ENCODE measurements at regions of chr20 and their contacts with region 1.

Region 1: GRCh38 chr20:35284267-35284991 is at the start of gene EIF6:
- DNase-seq: peak; percentile 23 to 78 (median 53)
- ATAC-seq: peak; percentile 80
- H3K4me3 ChIP-seq: peak within 1 kb of the TSS; percentile 56
- H3K4me3 Mint-ChIP-seq: peak within 1 kb of the TSS; percentile 71 to 96 (median 91)
- H3K27ac ChIP-seq: peak within 1 kb of the TSS; percentile 89
- H3K27ac Mint-ChIP-seq: peak within 1 kb of the TSS; percentile 79 to 94 (median 87)
- H3K4me1 ChIP-seq: peaks cover 7 to 8% of the 10 kb centered on the region in 2 donors
- H3K4me1 Mint-ChIP-seq: peaks cover 18 to 43% (median 30%) of the 10 kb centered on the region in 7 donors
- H3K27me3 ChIP-seq: no peaks in the 10 kb centered on the region
- H3K27me3 Mint-ChIP-seq: no peaks in the 10 kb centered on the region
- total RNA-seq, gene EIF6: 35.4 to 117 (median 39.9) TPM

Region 2: DNA sequence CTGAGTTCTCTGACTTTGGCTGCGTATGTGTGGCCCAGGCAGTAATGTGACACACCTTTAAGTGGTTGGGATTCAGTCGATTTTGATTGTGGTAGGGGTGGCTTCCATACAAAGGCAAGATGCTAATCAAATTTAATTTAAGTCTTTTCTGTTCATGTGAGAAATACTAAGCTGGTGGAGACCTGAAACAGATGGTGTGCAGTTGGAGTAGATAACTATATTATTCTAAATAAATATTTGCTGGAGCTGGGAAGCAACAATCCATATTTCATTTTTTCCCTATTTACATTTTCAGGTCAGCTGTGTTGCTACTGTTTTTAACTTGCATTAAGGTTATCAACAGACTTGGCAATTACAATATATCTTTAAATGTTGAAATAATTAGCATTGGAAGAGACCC is 1689.7 kb before region 1 on chr20:
- CTCF ChIA-PET with region 1: no interaction called
- POLR2A ChIA-PET with region 1: no interaction called
- intact Hi-C with region 1: no loop called
- DNase-seq: no peak
- ATAC-seq: no peak
- H3K4me3 ChIP-seq: no peak overlapping the region
- H3K4me3 Mint-ChIP-seq: no peak overlapping the region
- H3K27ac ChIP-seq: no peak overlapping the region
- H3K27ac Mint-ChIP-seq: no peak overlapping the region
- H3K4me1 ChIP-seq: no peaks in the 10 kb centered on the region
- H3K4me1 Mint-ChIP-seq: peaks cover 0 to 9% (median 4%) of the 10 kb centered on the region in 7 donors
- H3K27me3 ChIP-seq: no peaks in the 10 kb centered on the region
- H3K27me3 Mint-ChIP-seq: no peaks in the 10 kb centered on the region

Region 3: DNA sequence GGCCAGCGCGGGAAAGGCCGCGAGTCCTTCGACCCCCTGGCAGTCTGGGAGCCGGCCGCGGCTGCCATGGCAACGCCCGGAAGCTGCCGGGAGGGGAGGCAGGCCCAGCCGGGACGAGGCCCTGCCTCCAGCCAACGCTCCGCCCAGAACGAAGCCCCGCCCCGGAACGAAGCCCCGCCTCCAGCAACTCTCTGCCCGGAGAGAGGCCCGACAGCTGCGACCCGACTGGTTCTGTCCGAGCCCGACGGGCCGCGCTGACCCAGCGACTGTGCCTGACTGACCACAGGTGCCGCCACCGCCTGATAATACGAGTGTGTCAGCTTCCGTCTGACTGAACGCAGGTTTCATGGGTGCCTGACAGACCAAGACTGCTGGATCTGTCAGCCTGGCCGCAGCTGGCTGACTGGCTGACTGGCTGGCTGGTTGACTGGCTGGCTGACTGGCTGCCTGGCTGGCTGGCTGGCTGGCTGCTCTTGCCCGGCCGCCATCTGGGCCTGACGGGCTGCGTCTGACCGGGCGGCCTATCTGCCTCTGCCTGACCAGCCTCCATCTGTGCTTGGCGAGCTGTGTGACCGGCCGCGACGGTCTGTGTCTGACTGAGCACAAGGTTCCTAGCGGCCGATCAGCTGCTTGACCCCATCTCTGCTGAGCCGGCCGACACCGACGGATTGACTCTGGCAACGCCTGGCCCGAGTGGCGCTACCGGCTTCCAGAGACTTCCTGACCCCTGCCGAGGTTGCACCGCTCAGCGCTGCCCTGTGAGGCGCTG is 780.4 kb after region 1 on chr20:
- CTCF ChIA-PET with region 1: no interaction called
- POLR2A ChIA-PET with region 1: no interaction called
- intact Hi-C with region 1: loop called in 1 of 2 experiments (anchors 5 kb)
- DNase-seq: peak; percentile 83 to 97 (median 90)
- ATAC-seq: peak; percentile 99
- H3K4me3 ChIP-seq: peak overlapping the region; percentile 70
- H3K4me3 Mint-ChIP-seq: peak overlapping the region; percentile 81 to 92 (median 90)
- H3K27ac ChIP-seq: peak overlapping the region; percentile 63
- H3K27ac Mint-ChIP-seq: peak overlapping the region in 8 of 9 donors; percentile 41 to 90 (median 68)
- H3K4me1 ChIP-seq: peaks cover 0 to 3% of the 10 kb centered on the region in 2 donors
- H3K4me1 Mint-ChIP-seq: peaks cover 0 to 10% (median 1%) of the 10 kb centered on the region in 7 donors
- H3K27me3 ChIP-seq: no peaks in the 10 kb centered on the region
- H3K27me3 Mint-ChIP-seq: peaks cover 0 to 57% (median 0%) of the 10 kb centered on the region in 5 donors

Measured in naive thymus-derived CD4-positive, alpha-beta T cell (primary cell).